ENCODE measurements at regions of chr22 and their contacts with region 1.

Region 1: DNA sequence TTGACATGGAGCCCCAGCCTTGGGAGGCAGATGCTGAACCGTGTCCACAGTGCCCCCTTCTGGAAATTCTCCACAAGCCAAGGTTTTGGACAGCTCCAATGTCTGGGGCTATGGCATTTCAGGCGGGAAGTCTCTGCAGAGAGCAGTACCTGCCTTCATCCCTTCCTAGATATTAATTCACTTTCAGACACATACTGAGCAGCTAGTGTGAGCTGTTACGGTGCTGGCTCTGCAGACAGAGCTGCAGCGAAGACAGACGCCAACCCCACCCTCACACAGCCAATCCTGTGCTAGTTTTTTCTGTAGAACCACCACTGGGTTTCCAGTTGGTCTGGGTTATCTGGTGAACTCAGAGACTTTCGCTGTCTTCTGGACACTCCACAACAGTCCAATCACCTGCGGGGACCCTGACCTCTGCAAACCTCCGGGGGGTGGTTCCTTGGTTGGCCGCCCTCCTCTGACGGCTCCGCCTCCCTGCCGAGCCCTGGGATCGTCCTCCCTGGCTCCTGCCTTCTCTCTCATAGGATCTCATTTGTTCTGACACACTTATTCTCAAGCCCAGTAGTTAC is 9.1 kb downstream of the LMF2 start:
- DNase-seq: peak; percentile 85
- ATAC-seq: peak; percentile 92
- H3K4me3 Mint-ChIP-seq: no peak overlapping the region
- H3K27ac Mint-ChIP-seq: no peak overlapping the region
- H3K4me1 Mint-ChIP-seq: peaks cover 7% of the 10 kb centered on the region
- H3K27me3 Mint-ChIP-seq: peaks cover 13% of the 10 kb centered on the region

Region 2: DNA sequence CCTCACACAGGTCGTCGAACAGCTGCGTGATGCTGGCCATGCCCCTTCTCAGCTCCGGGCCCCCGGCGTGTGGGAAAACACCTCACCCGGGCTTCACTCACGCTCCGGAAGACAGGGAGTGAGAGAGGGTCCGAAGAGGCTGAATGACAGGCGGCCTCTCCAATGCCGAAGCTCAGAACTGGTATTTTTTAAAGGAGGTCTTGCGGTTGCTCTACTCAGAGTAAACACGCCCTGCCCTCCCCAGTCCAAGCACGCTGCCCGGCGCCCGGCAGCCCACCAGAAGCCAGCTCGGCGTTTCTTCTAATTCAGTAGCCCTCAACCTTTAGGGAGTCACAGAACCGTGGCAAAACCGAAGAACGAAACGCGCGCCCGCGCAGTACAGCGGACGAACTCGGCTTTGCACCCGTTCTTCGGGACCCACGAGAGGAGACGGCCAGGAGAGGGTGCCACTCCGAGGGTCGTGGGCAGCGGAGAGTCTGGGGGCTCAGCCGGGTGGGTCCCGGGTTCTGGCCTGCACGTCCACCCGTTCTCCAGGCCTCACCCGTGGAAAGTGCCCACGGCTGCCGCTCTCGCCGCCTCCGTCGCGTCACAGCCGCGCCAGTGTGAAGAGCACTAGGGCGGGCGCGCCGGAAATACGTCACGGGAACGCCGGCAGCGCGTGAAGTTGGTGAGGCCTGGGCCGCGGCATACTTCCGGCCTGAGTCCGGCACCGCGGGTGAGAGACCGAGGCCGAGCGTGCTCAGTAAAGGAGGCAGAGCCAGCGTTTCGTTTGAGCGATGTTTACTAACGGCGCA is 253.8 kb before region 1 on chr22 and contains the start of gene TUBGCP6:
- CTCF ChIA-PET with region 1: interaction called, 12 read pairs
- DNase-seq: peak; percentile 95
- ATAC-seq: peak; percentile 84
- H3K4me3 Mint-ChIP-seq: peak within 1 kb of the TSS; percentile 90
- H3K27ac Mint-ChIP-seq: peak within 1 kb of the TSS; percentile 99
- H3K4me1 Mint-ChIP-seq: peaks cover 46% of the 10 kb centered on the region
- H3K27me3 Mint-ChIP-seq: no peaks in the 10 kb centered on the region
- total RNA-seq, gene TUBGCP6: 60.9 to 72.0 TPM

Region 3: GRCh38 chr22:50444663-50445062 is 53.7 kb before region 1 on chr22:
- CTCF ChIA-PET with region 1: interaction called, 10 read pairs
- DNase-seq: no peak
- ATAC-seq: no peak
- H3K4me3 Mint-ChIP-seq: no peak overlapping the region
- H3K27ac Mint-ChIP-seq: peak overlapping the region; percentile 84
- H3K4me1 Mint-ChIP-seq: peaks cover 24% of the 10 kb centered on the region
- H3K27me3 Mint-ChIP-seq: no peaks in the 10 kb centered on the region

Region 4: DNA sequence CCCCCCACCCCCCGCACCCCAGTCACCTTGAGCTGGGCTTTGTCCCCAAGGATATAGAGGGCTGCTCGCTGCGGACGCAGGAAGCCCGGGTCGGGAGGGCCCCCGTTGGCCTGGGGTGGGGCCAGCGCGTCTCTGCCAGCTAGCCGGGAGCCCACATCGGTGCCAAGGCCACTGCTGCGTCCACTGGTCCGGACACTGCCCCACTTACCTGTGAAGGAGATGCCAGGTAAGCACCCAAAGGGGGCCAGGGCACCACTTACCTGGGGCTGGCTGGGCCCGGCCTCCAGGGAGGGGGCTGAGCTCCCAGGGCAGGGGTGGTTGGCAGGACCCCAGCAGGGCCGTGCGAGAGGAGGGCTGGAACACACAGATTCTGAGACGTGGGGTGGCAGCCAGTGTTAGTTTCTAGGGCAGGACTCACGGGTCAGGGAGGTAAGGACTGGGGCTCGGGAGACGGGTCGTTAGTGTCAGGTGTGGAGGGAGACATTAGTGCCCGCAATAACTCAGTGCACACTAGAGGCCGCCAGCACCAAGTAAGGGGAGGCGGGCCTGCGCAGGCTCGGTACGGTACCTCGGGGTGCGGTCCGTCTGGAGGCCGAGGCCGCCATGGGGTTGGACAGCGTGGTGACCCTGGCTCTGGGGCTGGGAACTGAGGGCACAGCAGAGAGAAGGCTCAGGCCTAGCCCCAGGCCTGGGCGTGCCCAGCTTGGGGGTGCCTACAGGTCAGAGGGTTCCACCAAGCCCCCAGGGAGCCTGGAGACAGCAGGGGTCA is 41.8 kb before region 1 on chr22:
- CTCF ChIA-PET with region 1: interaction called, 11 read pairs
- DNase-seq: no peak
- ATAC-seq: no peak
- H3K4me3 Mint-ChIP-seq: no peak overlapping the region
- H3K27ac Mint-ChIP-seq: peak overlapping the region; percentile 18
- H3K4me1 Mint-ChIP-seq: peaks cover 9% of the 10 kb centered on the region
- H3K27me3 Mint-ChIP-seq: no peaks in the 10 kb centered on the region

Region 5: GRCh38 chr22:50469377-50470305 is 28.8 kb before region 1 on chr22:
- CTCF ChIA-PET with region 1: interaction called, 28 read pairs
- DNase-seq: peak; percentile 99
- ATAC-seq: peak; percentile 77
- H3K4me3 Mint-ChIP-seq: peak overlapping the region; percentile 69
- H3K27ac Mint-ChIP-seq: peak overlapping the region; percentile 88
- H3K4me1 Mint-ChIP-seq: peaks cover 69% of the 10 kb centered on the region
- H3K27me3 Mint-ChIP-seq: no peaks in the 10 kb centered on the region

Region 6: DNA sequence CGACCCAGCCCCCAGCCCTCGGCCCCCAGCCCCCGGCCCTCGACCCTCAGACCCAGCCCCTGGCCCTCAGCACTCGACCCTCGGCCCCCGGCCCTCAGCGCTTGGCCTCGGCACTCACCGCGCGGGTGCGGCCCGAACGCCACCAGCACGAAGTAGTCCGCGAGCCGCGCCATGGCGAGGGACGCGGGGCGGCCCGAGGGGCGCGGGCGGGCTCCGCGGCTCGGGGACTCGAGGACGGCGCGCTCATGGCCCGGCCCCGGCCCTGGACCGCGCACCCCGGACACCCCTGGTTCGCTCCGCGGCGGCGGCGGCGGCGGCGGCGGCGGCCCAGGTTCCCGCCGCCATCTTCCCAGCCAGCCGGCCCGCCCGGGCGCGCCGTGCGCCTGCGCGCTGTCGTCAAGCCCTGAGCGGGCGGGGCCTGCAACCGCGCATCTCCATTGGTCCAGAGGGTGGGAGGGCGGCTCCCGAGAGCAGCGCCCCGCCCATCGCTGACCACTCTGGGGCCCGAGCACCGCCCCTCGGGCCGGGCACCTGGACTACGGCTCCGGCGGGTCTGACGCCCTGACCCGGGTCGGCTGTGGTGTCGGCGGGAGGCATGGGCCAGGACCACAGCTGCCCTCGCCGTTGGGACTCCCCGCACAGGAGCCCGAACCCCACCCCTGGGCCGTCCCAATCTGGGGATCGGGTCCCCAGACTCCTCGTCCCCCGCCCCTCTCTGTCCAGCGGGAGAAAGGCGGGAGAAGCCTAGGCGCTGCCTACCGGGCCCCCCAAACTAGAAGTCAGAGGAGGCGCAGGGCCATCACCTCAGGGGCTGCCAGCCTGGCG is 23.5 kb before region 1 on chr22 and contains the start of gene SBF1:
- CTCF ChIA-PET with region 1: interaction called, 28 read pairs
- DNase-seq: peak; percentile 92
- ATAC-seq: peak; percentile 83
- H3K4me3 Mint-ChIP-seq: peak within 1 kb of the TSS; percentile 93
- H3K27ac Mint-ChIP-seq: peak within 1 kb of the TSS; percentile 95
- H3K4me1 Mint-ChIP-seq: peaks cover 50% of the 10 kb centered on the region
- H3K27me3 Mint-ChIP-seq: peaks cover 10% of the 10 kb centered on the region
- total RNA-seq, gene SBF1: 192 to 207 TPM

Measured in activated CD8-positive, alpha-beta memory T cell treated with anti-CD3 and anti-CD28 coated beads, Interleukin-2, amount 10 ng/mL, durations not matched to agents 7 days and 5 days (primary cell).